ENCODE measurements at regions of chr6 and their contacts with region 1.

Region 1: DNA sequence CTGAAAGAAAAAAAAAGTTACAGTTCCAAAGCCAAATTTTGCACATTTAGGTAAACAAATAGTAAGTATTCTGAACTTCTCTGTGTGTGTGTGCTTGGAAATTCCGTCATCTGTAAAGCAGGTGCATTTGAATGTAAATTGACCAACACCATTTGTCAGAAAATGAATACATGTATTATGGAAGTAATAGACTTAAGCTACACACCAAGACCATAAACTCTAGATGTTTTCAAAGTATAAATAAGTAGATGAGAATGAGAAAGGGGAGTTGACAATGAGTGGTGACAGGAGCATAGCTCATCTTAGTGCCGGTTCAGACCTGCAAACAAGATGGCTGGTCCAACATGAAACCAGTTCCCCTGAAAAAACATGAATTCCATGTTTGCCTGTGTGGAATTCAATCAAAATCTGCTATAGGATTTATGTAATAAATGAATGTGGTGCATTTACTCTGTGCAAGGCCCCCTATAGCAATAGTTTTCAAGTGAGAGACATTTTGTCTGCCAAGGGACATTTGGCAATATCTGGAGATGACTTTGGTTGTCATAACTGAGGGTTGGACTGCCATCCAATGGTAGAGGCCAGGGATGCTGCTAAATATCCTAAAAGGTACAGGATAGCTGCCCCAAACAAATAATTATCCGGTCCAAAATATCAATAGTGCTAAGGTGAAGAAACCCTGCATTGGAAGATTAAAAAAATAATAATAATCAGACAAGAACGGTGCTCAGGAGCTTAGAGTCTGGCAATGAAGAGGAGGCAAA is 11.0 kb upstream of the FILIP1 start:
- DNase-seq: no peak
- ATAC-seq: peak; percentile 53 to 91 (median 88)
- H3K4me3 ChIP-seq: no peak overlapping the region
- H3K27ac ChIP-seq: no peak overlapping the region
- H3K4me1 ChIP-seq: peaks cover 0 to 23% (median 4%) of the 10 kb centered on the region in 12 donors
- H3K27me3 ChIP-seq: no peaks in the 10 kb centered on the region
- CTCF ChIP-seq: peak; percentile 29 to 70 (median 58)
- POLR2A ChIP-seq: no peak

Region 2: DNA sequence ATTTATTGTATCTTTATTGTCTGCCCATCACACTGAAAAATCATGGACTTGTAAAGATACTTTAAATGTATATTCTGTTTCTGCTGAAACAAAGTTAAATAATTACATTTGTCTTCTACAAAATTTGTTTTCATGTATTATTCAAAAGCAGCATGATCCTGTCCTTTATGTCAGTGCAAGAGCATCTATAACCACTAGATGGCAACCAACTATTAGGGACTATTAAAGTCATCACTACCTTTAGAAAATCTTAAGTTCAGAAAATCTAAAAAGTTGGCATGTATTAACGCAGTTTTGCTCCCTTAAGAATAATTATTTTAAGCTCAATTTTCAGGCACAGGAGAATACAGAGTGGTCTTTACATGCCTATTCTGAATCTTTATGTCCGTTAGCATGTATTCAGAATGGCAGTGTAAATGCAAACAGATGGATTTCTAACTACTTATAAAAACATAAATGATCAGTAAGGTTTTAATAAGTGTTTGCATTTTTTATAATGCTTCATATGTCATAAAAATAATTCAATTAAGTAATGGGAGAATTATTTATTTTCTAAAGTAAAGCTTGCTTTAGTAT is 237.8 kb before region 1 on chr6:
- intact Hi-C with region 1: loop called in 2 of 10 experiments (anchors 5 kb)
- DNase-seq: no peak
- ATAC-seq: peak in 3 of 4 donors; percentile 68 to 70 (median 70)
- H3K4me3 ChIP-seq: no peak overlapping the region
- H3K27ac ChIP-seq: no peak overlapping the region
- H3K4me1 ChIP-seq: peaks cover 0 to 48% (median 21%) of the 10 kb centered on the region in 12 donors
- H3K27me3 ChIP-seq: no peaks in the 10 kb centered on the region
- CTCF ChIP-seq: peak; percentile 69 to 93 (median 86)
- POLR2A ChIP-seq: no peak

Region 3: DNA sequence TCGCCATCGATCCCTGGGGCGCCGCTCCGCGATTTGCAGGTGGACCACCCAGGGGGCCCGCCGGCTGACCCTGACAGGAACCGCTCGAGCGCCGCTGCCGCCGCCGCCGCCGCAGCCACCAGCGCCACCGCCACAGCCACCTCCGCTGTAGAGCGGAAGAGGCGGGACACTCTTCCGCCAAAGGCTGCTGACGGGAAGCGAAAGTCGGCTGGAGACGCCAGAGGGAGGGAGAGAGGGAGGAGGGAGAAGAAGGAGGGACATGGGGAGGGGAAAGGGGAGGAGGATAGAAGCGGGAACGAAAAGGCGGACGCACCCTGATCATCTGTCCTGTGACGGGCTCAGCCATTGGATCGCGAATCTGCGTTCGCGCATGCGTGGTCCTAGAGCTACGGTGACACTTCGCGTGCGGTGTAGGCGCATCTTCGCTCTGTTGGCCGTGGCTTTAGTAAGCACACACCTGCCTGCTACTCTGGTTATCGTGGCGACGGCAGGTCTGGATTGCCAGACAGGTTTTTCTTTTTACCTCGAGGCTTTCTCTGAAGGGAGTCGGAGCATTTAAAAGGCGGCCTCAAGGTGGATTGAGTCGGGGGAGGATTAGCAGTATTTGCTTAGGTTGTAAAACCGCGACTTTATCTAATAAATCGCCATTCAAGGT is 219.9 kb before region 1 on chr6 and contains the start of gene TMEM30A:
- intact Hi-C with region 1: loop called in 1 of 10 experiments (anchors 5 kb)
- DNase-seq: peak; percentile 97 to 98 (median 98)
- ATAC-seq: peak; percentile 99 to 100 (median 100)
- H3K4me3 ChIP-seq: peak within 1 kb of the TSS; percentile 59 to 92 (median 84)
- H3K27ac ChIP-seq: peak within 1 kb of the TSS; percentile 70 to 95 (median 90)
- H3K4me1 ChIP-seq: peaks cover 7 to 60% (median 38%) of the 10 kb centered on the region in 12 donors
- H3K27me3 ChIP-seq: no peaks in the 10 kb centered on the region
- CTCF ChIP-seq: peak in 3 of 12 donors; percentile 17 to 38 (median 33)
- POLR2A ChIP-seq: peak in 1 of 2 donors; percentile 86
- total RNA-seq, gene TMEM30A: 30.8 to 86.3 (median 58.2) TPM

Region 4: DNA sequence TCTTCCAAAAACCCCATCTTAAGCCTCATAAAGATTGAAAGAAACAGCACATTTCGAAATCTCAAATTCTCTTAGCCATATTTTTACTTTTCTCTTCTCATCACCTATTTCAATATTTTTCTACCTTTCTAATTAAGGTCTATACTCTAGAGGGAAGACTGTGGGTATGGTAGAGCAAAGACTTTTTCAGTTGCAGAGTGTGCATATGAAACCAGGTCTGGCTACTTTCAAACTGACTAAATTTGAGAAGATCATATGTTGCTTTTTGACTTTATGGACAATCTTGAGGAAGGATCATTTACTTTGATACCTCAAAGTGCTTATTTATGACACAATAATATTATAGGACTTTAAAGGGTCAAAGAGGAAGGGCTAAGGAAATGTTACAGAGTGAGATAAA is 31.8 kb before region 1 on chr6:
- intact Hi-C with region 1: no loop called
- DNase-seq: no peak
- ATAC-seq: no peak
- H3K4me3 ChIP-seq: no peak overlapping the region
- H3K27ac ChIP-seq: no peak overlapping the region
- H3K4me1 ChIP-seq: peaks cover 0 to 48% (median 14%) of the 10 kb centered on the region in 12 donors
- H3K27me3 ChIP-seq: no peaks in the 10 kb centered on the region
- CTCF ChIP-seq: no peak
- POLR2A ChIP-seq: no peak

Region 5: DNA sequence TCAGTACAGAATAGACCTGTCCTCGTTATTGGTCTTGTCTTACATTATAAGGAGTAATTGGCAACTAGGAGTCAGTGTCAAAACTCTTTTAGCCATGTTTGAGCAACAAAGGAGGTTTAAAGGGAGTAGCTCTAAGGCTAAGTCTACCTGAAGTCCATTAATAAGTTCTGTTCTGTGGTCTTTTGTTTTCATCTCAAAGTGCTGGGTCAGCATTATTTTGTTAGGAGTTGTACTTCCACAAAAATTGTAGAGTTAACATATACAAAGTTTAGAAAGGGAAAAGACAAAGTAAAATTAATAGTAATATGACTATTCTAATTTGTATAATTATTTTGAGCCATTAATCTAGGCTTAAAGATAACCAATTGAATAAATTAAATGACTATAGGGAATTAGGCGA is 84.3 kb after region 1 on chr6:
- intact Hi-C with region 1: no loop called
- DNase-seq: no peak
- ATAC-seq: no peak
- H3K4me3 ChIP-seq: no peak overlapping the region
- H3K27ac ChIP-seq: no peak overlapping the region
- H3K4me1 ChIP-seq: no peaks in the 10 kb centered on the region
- H3K27me3 ChIP-seq: no peaks in the 10 kb centered on the region
- CTCF ChIP-seq: no peak
- POLR2A ChIP-seq: no peak

Measured in heart left ventricle (tissue), 16 donors.